ENCODE measurements at regions of chr6 and their contacts with region 1.

Region 1: GRCh38 chr6:116531675-116532570 is 13.6 kb downstream of the TRAPPC3L start:
- DNase-seq: peak; percentile 77
- ATAC-seq: peak; percentile 91
- H3K4me3 Mint-ChIP-seq: no peak overlapping the region
- H3K27ac Mint-ChIP-seq: no peak overlapping the region
- H3K4me1 Mint-ChIP-seq: no peaks in the 10 kb centered on the region
- H3K27me3 Mint-ChIP-seq: peaks cover 10% of the 10 kb centered on the region

Region 2: GRCh38 chr6:116268589-116269293 is 263.2 kb before region 1 on chr6:
- CTCF ChIA-PET with region 1: interaction called, 9 read pairs
- POLR2A ChIA-PET with region 1: no interaction called
- intact Hi-C with region 1: loop called in 1 of 2 experiments (anchors 5 kb)
- DNase-seq: no peak
- ATAC-seq: peak; percentile 72
- H3K4me3 Mint-ChIP-seq: no peak overlapping the region
- H3K27ac Mint-ChIP-seq: no peak overlapping the region
- H3K4me1 Mint-ChIP-seq: peaks cover 28% of the 10 kb centered on the region
- H3K27me3 Mint-ChIP-seq: no peaks in the 10 kb centered on the region

Region 3: DNA sequence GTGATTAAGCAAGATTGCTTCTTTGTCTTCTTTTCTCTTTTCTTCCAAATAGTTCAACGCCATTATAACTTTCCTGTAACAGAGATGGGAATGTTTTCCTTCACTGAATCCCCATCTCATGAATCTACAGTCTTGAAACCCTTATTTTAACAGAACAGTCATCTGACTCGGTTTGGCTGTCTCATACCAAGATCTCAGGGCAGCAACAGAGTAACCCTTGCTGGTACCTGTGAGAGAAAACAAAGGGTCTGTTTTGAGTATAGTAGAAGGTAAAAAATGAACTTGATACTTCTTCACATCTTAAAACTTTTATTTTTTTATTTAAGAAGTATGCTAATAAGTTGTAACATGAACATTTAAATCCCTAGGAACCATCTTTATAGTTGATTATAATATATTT is 180.8 kb before region 1 on chr6:
- CTCF ChIA-PET with region 1: no interaction called
- POLR2A ChIA-PET with region 1: no interaction called
- intact Hi-C with region 1: no loop called
- DNase-seq: no peak
- ATAC-seq: no peak
- H3K4me3 Mint-ChIP-seq: no peak overlapping the region
- H3K27ac Mint-ChIP-seq: no peak overlapping the region
- H3K4me1 Mint-ChIP-seq: no peaks in the 10 kb centered on the region
- H3K27me3 Mint-ChIP-seq: no peaks in the 10 kb centered on the region

Region 4: GRCh38 chr6:116444092-116444491 is 87.8 kb before region 1 on chr6:
- CTCF ChIA-PET with region 1: interaction called, 3 read pairs
- POLR2A ChIA-PET with region 1: no interaction called
- intact Hi-C with region 1: loop called (anchors 1 to 2 kb)
- DNase-seq: no peak
- ATAC-seq: peak; percentile 75
- H3K4me3 Mint-ChIP-seq: no peak overlapping the region
- H3K27ac Mint-ChIP-seq: no peak overlapping the region
- H3K4me1 Mint-ChIP-seq: peaks cover 9% of the 10 kb centered on the region
- H3K27me3 Mint-ChIP-seq: peaks cover 18% of the 10 kb centered on the region

Region 5: DNA sequence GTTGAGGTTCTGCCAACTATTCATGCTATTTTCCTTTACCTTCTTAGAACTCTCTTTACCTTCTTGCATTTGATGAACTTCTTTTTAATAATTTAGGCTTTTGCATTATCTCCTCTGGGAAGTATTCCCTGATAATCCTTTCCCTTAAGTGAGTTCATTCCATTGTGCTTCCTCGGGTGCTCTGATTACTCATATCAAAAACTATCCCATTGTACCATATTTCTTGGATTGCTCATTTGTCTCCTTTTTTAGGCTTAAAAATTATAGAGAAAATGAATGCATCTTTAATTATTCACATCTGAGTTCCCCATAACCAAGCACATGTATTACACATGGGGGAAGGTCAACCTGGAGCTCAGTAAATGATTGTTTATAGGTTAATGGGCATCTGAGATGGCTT is 24.1 kb after region 1 on chr6:
- CTCF ChIA-PET with region 1: interaction called, 39 read pairs
- POLR2A ChIA-PET with region 1: no interaction called
- intact Hi-C with region 1: loop called (anchors 1 kb)
- DNase-seq: no peak
- ATAC-seq: no peak
- H3K4me3 Mint-ChIP-seq: no peak overlapping the region
- H3K27ac Mint-ChIP-seq: no peak overlapping the region
- H3K4me1 Mint-ChIP-seq: no peaks in the 10 kb centered on the region
- H3K27me3 Mint-ChIP-seq: peaks cover 10% of the 10 kb centered on the region

Region 6: DNA sequence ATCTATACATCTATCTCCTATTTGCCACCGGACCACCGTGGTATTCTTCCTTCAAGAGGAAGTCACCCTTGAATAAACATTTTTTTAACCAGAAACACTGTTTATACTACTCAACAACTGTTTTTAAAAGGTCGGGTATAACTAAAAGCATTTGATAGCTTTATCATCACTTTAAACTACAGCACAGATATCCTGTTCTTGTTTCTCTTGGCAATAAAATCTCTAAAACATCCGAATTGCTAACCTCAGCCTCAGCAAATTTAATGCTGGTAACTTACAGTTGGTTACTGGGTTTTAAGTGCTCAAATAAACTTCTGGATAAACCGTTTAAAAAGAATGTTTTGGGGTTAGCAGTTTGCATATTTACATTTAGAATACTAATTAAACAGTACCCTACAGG is 116.2 kb after region 1 on chr6:
- CTCF ChIA-PET with region 1: interaction called, 3 read pairs
- POLR2A ChIA-PET with region 1: no interaction called
- intact Hi-C with region 1: loop called (anchors 1 kb)
- DNase-seq: no peak
- ATAC-seq: no peak
- H3K4me3 Mint-ChIP-seq: no peak overlapping the region
- H3K27ac Mint-ChIP-seq: no peak overlapping the region
- H3K4me1 Mint-ChIP-seq: peaks cover 6% of the 10 kb centered on the region
- H3K27me3 Mint-ChIP-seq: no peaks in the 10 kb centered on the region